AG04449 (cell line): ENCODE measurements at regions of chr10 and their contacts with region 1.

Region 1: GRCh38 chr10:93376372-93377293 is 105.5 kb downstream of the MYOF start:
- DNase-seq: peak; percentile 67
- H3K4me3 ChIP-seq: no peak overlapping the region; the same call in 1 of the 2 replicates
- CTCF ChIP-seq: peak; percentile 71

Region 2: GRCh38 chr10:93352638-93353383 is 23.8 kb before region 1 on chr10:
- CTCF ChIA-PET with region 1: interaction called, 109 read pairs
- POLR2A ChIA-PET with region 1: no interaction called
- DNase-seq: no peak
- H3K4me3 ChIP-seq: no peak overlapping the region
- CTCF ChIP-seq: peak; percentile 17

Region 3: GRCh38 chr10:93406364-93407145 is 29.9 kb after region 1 on chr10:
- CTCF ChIA-PET with region 1: interaction called, 30 read pairs
- POLR2A ChIA-PET with region 1: no interaction called
- DNase-seq: no peak
- H3K4me3 ChIP-seq: no peak overlapping the region
- CTCF ChIP-seq: no peak

Region 4: DNA sequence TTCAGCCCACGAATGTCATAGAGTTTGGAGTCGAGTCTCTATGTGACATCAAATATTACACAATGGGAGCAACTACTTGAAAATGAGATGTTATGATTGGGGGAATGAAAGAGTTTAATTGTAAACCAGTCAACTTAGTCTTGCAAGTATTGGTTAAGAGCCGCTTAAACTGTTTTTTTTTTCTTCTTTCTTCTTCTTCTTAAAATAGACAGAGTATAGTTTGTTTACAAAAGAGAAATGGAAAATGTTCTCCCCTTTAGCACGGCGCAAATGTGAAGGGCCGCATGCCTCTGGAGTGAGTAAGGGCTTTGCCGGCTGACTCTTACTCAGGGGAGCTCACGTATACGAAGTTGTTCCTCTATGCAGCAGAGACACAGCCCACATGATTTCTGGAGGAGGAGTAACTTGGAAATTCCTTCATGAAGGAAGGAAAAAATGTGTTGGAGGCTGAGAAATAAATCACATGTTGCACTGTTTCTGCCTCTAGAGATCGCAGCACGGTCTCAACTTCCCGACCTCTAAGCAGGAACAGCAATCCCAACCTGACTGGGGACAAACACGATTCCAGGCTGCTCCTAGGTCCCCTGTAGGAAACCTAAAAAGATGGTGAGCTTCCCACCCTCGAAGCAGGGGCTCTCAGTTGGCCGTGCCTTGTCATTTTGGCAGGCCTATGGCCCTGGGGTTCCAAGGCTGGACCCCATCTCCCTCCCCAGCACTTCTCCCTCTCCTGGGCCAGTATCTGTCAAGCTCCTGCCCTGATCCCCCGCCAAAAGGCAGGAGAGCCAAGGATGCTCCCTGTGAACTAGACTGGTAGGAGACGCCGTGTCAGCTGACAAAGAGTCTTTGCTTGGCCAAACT is 60.7 kb after region 1 on chr10:
- CTCF ChIA-PET with region 1: interaction called, 44 read pairs
- POLR2A ChIA-PET with region 1: interaction called, 3 read pairs
- DNase-seq: peak; percentile 98
- H3K4me3 ChIP-seq: no peak overlapping the region; the same call in none of the 2 replicates
- CTCF ChIP-seq: no peak

Region 5: DNA sequence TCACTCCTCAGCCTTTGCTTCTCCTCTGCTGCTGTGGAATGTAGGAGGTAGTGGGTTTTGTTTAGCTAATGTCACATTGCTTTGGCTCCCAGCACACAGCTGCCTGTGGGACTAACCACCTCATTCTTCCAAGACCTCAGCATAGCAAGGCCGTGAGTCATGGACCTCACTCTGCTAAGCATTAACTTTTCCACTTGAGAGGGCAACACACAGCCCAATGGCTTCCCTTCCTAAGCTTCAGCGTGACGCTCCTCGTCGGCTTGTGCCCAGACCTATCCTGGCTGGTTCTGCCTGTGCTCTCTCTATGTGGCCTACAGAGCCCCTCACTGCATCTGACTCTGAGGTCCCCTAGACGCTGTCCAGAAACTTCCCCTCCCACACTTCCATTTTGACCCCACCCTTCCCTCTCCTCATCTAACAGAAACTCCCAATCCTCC is 82.2 kb after region 1 on chr10:
- CTCF ChIA-PET with region 1: interaction called, 42 read pairs
- POLR2A ChIA-PET with region 1: interaction called, 6 read pairs
- DNase-seq: peak; percentile 99
- H3K4me3 ChIP-seq: no peak overlapping the region
- CTCF ChIP-seq: no peak

Region 6: GRCh38 chr10:93503075-93503474 is 126.4 kb after region 1 on chr10:
- CTCF ChIA-PET with region 1: interaction called, 45 read pairs
- POLR2A ChIA-PET with region 1: no interaction called
- DNase-seq: no peak
- H3K4me3 ChIP-seq: no peak overlapping the region
- CTCF ChIP-seq: no peak